Head of caudate nucleus (tissue), 42 donors: ENCODE measurements at regions of chr7 and their contacts with region 1.

Region 1: DNA sequence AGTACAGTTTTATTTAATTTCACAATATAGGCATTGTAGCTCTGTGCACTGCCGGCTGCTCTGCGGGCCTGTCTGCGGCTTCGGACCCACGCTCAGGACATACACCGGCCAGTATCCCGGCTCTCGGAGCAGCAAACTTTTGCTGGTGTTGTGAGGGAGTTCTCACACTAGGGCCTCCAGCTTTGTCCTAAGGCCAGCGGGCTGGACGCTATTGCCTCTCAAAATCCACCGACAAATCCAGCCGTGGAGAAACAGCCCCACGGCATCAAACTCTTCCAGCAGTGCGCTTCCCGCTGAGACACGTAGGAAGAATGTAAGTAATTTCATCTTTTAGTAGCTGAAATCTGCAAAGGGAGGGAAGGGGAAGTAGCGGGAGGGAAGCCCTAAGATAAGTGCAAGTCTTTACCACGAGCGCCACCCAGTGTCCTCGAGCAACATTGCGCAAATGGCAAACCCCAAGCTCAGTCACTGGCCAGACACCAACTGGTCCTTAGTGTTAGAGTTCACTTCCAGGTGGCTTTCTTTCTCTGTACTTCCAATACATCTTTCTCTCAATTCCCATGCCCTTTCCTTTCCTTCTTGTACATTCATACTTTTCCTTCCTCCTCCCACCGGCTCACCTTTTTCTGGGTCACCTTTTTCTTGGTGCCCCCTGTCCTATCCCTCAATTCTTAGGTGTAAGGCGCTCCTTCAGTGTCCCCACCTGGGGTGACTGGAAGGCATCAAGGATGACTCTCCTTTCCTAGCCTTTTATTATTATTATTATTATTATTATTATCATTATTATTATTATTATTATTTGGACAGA is 3.0 kb upstream of the DLX5 start:
- DNase-seq: peak; percentile 70 to 93 (median 85)

Region 2: GRCh38 chr7:95916573-95917297 is 1110.9 kb before region 1 on chr7:
- intact Hi-C with region 1: loop called (anchors 5 kb)
- DNase-seq: peak; percentile 41 to 97 (median 89)

Region 3: DNA sequence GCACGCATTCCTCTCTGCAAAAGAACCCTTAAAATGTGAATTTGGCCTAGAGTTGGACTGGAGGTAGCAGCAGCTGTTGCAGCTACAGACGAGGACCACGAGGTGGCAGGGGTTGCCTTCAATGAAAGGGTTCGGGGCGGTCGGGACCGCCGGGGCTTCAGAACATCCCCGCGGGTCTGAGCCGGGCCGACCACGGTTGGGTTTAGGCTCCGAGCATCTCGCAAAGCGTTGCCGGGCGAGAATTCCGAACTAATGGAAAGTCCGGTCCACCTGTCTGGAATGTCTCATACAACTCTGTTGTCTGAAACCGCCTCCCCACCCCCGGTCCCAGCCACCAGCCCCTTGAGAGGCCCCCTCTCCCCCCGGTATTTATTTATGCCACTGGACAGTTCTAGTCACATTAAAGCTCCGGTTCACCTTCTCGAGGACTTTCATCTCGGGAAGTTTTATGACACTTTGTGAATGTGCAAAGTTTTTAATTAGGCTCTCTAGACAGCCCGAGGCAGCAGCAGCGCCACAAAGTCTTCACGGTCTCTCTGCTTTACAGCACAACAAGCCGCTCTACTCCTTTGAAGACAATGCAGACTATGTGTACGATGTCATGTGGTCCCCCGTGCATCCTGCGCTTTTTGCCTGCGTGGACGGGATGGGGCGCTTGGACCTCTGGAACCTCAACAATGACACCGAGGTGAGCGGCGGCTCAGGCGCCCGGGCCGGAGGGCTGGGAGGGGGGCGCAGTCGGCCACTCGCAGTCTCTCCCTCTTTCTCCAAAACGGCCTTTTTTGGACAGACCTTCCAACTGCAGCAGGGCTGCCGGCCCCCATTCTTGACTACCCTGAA is 951.9 kb before region 1 on chr7:
- intact Hi-C with region 1: loop called (anchors 2 kb)
- DNase-seq: peak; percentile 49 to 89 (median 77)

Region 4: DNA sequence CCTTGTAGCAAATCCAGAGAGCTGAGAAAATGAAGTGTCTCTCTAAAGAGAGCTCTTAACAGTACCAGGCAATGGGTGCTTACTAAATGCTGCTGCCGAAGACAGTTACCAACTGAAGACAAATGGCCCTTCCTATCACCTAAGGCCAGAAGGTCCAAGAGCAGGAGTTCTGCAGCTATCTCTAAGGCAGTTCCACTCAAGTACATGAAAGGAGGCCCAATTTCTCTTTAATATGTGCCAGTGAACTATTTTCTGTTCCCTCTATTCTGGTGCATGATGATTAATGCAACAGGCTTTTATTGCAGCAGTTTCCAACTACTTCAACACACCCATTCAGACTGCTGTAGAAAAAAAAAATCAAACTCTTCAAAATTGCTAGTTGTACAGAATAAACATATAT is 828.2 kb before region 1 on chr7:
- intact Hi-C with region 1: loop called (anchors 10 kb)
- DNase-seq: no peak

Region 5: DNA sequence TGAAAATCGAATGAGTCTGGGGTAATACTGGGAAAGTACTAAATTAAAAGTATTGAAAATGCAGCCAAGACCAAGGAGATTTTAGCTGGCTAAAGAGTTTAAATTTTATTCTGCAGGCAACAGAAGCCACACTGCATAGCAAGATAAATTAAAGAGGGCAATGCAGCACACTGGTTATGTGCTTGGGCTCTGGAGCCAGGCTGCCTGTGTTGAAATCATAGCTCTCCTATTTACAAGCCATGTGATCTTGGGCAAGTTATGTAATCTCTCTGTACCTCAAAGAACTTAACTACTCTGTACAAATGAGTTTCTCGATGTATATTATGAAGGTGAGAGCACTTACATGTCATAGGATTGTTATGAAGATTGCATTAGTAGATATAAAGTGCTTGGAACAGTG is 715.7 kb before region 1 on chr7:
- intact Hi-C with region 1: loop called (anchors 10 kb)
- DNase-seq: peak in 27 of 42 donors; percentile 19 to 82 (median 46)

Region 6: DNA sequence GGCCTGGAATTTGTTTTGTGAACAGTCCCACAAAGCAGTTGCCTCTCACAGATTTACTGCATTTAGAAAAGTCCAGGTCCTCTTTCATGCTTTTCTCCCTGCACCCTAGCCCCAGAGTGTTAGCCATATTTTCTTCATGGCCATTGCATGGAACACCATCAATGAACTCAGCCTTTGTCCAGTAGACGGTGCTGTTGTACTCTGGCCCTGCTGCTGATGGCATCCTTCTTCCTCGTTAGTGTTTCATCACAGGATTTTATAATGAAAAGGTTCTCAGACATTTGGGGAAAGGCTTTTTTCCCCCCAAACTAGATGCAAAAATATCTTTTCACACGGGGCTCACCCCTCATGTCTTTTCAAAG is 612.7 kb before region 1 on chr7:
- intact Hi-C with region 1: loop called (anchors 10 kb)
- DNase-seq: peak; percentile 6 to 82 (median 55)

Region 7: GRCh38 chr7:96962221-96962885 is 65.3 kb before region 1 on chr7:
- intact Hi-C with region 1: no loop called
- DNase-seq: no peak

Region 8: DNA sequence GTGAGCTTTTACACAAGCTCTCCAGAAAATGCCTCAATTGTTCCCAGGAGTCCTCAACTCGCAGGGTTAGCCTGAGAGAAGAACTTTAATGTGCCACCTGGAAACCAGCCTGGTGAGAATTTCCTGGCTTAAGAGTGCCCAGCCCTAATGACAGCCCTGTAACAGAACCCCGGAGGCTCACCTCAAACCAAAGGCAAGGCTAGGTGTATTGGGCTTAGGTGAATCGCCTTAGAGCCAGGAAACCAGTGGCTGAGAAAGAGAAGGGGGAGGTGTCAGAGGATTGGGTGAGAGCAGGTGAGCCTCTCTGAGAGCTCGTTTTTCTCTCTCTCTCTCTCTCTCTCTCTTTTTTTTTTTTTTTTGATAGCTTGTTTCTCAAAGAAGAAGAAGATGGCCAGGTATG is 955.0 kb after region 1 on chr7:
- intact Hi-C with region 1: no loop called
- DNase-seq: no peak